ENCODE measurements at regions of chr5 and their contacts with region 1.

Region 1: GRCh38 chr5:109439590-109439989 is 29.8 kb upstream of the PJA2 start:
- DNase-seq: no peak
- ATAC-seq: no peak
- H3K4me3 ChIP-seq: no peak overlapping the region
- H3K4me3 Mint-ChIP-seq: no peak overlapping the region
- H3K27ac ChIP-seq: no peak overlapping the region
- H3K27ac Mint-ChIP-seq: no peak overlapping the region
- H3K4me1 ChIP-seq: no peaks in the 10 kb centered on the region
- H3K4me1 Mint-ChIP-seq: no peaks in the 10 kb centered on the region
- H3K27me3 ChIP-seq: no peaks in the 10 kb centered on the region
- H3K27me3 Mint-ChIP-seq: peaks cover 0 to 9% (median 0%) of the 10 kb centered on the region in 5 donors

Region 2: DNA sequence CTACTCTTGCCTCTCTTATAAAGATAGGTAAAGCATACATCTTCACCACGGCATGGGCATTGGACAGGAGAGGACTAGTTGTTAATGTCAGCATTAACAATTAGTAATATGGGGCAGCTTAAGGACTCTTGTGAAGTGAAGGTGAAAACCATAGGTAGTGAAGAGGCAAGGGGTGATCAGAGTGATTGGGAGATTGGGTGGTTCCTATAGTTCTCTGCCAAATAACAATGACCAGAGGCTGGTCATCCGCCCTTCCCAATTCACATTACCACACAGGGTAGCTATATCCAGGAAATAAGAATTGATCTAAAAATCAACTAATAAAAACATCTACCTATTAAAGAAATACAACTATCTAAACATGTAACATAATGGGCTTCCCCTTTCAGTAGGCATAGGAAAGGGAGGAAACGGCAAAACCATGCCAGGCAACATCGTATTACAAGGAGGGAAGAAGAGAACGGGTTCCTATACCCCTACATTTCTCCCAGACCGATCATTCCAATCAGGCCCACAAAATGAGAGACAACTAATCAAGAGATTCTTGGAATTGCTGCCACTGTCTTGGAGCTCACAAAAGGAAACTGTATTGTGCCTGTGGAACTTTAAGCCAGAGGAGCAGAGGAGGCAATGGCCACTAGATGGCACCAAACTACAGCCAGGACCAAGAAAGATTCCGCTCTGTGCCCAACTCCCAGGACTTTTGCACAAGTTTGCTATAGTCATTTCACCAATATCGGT is 1179.3 kb before region 1 on chr5:
- CTCF ChIA-PET with region 1: no interaction called
- POLR2A ChIA-PET with region 1: no interaction called
- intact Hi-C with region 1: loop called in 1 of 2 experiments (anchors 10 kb)
- DNase-seq: peak; percentile 22 to 62 (median 52)
- ATAC-seq: peak; percentile 81
- H3K4me3 ChIP-seq: no peak overlapping the region
- H3K4me3 Mint-ChIP-seq: peak overlapping the region in 4 of 10 donors; percentile 49 to 63 (median 56)
- H3K27ac ChIP-seq: no peak overlapping the region
- H3K27ac Mint-ChIP-seq: peak overlapping the region in 2 of 9 donors; percentile 19
- H3K4me1 ChIP-seq: no peaks in the 10 kb centered on the region
- H3K4me1 Mint-ChIP-seq: peaks cover 5 to 18% (median 8%) of the 10 kb centered on the region in 7 donors
- H3K27me3 ChIP-seq: no peaks in the 10 kb centered on the region
- H3K27me3 Mint-ChIP-seq: no peaks in the 10 kb centered on the region

Region 3: DNA sequence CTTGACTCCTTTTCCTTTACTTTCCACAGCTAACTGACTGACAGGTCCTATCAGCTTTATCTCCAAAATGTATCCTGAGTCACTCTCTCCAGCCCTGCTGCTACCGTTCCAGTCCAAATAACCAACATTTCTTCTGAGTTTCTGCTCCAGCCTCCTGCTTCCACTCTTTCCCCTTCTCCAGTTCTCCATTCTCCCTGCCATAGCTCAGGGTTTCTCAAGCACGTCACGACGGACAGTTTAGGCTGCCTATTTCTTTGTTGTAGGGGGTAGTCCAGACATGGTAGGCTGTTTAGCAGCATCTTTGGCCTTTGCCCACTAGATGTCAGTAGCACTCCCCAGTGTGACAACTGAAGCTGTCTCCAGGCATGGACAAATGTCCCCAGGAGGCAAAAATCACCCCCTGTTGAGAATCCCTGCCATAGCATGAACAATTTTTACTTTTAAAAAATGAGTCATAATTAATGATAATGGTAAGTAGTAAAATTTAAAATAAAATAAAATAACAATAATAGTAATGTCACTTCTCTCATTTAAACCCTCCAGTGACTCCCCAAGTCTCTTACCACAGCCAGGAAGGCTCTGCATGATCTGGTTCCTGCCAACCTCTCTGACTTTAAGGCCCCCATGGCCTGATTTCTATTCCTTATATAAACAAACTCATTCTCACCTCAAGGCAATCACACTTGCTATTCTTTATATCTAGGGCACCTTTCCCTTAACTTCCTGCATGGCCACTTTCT is 797.3 kb before region 1 on chr5:
- CTCF ChIA-PET with region 1: no interaction called
- POLR2A ChIA-PET with region 1: no interaction called
- intact Hi-C with region 1: loop called (anchors 1 to 2 kb)
- DNase-seq: peak in 8 of 9 donors; percentile 16 to 52 (median 32)
- ATAC-seq: peak; percentile 83
- H3K4me3 ChIP-seq: no peak overlapping the region
- H3K4me3 Mint-ChIP-seq: peak overlapping the region in 4 of 10 donors; percentile 4 to 73 (median 34)
- H3K27ac ChIP-seq: no peak overlapping the region
- H3K27ac Mint-ChIP-seq: peak overlapping the region in 1 of 9 donors; percentile 33
- H3K4me1 ChIP-seq: no peaks in the 10 kb centered on the region
- H3K4me1 Mint-ChIP-seq: peaks cover 0 to 4% (median 3%) of the 10 kb centered on the region in 7 donors
- H3K27me3 ChIP-seq: no peaks in the 10 kb centered on the region
- H3K27me3 Mint-ChIP-seq: peaks cover 0 to 8% (median 4%) of the 10 kb centered on the region in 5 donors

Region 4: GRCh38 chr5:108919591-108920326 is 519.8 kb before region 1 on chr5:
- CTCF ChIA-PET with region 1: no interaction called
- POLR2A ChIA-PET with region 1: no interaction called
- intact Hi-C with region 1: loop called (anchors 1 kb)
- DNase-seq: peak in 2 of 9 donors; percentile 0 to 3
- ATAC-seq: no peak
- H3K4me3 ChIP-seq: no peak overlapping the region
- H3K4me3 Mint-ChIP-seq: no peak overlapping the region
- H3K27ac ChIP-seq: no peak overlapping the region
- H3K27ac Mint-ChIP-seq: no peak overlapping the region
- H3K4me1 ChIP-seq: no peaks in the 10 kb centered on the region
- H3K4me1 Mint-ChIP-seq: peaks cover 0 to 5% (median 0%) of the 10 kb centered on the region in 7 donors
- H3K27me3 ChIP-seq: no peaks in the 10 kb centered on the region
- H3K27me3 Mint-ChIP-seq: no peaks in the 10 kb centered on the region

Region 5: DNA sequence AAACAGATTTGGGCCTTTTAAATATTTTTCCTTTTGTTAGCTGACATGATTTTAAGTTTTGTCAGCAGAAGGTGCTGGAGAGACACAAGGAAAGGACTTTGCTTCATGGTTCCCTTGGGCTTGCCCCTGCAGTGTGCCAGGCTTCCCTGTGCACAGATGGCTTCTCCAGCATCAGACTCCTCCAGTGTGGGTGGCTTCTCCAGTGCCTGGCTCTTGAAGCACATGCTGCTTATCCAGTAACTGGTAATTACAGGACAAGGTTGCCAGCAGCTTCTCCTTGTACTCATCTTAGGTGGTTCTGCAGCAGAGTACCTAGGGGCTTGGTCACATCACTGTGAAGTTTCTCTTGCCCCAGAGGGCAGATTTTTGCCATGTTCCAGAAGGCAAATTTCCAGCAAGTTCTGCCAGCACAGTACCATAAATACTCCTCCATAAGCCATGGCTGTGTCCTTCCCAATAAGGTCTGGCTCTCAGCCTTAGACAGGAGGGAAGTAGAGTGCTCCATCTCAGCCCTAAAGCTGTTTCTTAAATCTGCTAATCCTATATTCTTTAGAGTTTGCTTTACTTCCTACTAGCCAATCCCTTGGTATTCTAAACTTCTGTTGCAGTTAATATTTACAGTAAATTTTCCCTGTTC is 92.2 kb before region 1 on chr5:
- CTCF ChIA-PET with region 1: no interaction called
- POLR2A ChIA-PET with region 1: no interaction called
- intact Hi-C with region 1: loop called in 1 of 2 experiments (anchors 2 kb)
- DNase-seq: no peak
- ATAC-seq: peak; percentile 14
- H3K4me3 ChIP-seq: no peak overlapping the region
- H3K4me3 Mint-ChIP-seq: no peak overlapping the region
- H3K27ac ChIP-seq: no peak overlapping the region
- H3K27ac Mint-ChIP-seq: peak overlapping the region in 6 of 9 donors; percentile 13 to 70 (median 34)
- H3K4me1 ChIP-seq: no peaks in the 10 kb centered on the region
- H3K4me1 Mint-ChIP-seq: peaks cover 4 to 34% (median 9%) of the 10 kb centered on the region in 7 donors
- H3K27me3 ChIP-seq: no peaks in the 10 kb centered on the region
- H3K27me3 Mint-ChIP-seq: no peaks in the 10 kb centered on the region

Region 6: GRCh38 chr5:109388407-109388806 is 51.2 kb before region 1 on chr5:
- CTCF ChIA-PET with region 1: no interaction called
- POLR2A ChIA-PET with region 1: no interaction called
- intact Hi-C with region 1: loop called in 1 of 2 experiments (anchors 2 kb)
- DNase-seq: no peak
- ATAC-seq: no peak
- H3K4me3 ChIP-seq: no peak overlapping the region
- H3K4me3 Mint-ChIP-seq: peak overlapping the region in 3 of 10 donors; percentile 5 to 47 (median 17)
- H3K27ac ChIP-seq: no peak overlapping the region
- H3K27ac Mint-ChIP-seq: peak overlapping the region in 2 of 9 donors; percentile 37 to 43
- H3K4me1 ChIP-seq: peaks cover 5 to 7% of the 10 kb centered on the region in 2 donors
- H3K4me1 Mint-ChIP-seq: peaks cover 28 to 93% (median 88%) of the 10 kb centered on the region in 7 donors
- H3K27me3 ChIP-seq: no peaks in the 10 kb centered on the region
- H3K27me3 Mint-ChIP-seq: no peaks in the 10 kb centered on the region